Head of caudate nucleus (tissue), 42 donors: ENCODE measurements at regions of chr10 and their contacts with region 1.

Region 1: DNA sequence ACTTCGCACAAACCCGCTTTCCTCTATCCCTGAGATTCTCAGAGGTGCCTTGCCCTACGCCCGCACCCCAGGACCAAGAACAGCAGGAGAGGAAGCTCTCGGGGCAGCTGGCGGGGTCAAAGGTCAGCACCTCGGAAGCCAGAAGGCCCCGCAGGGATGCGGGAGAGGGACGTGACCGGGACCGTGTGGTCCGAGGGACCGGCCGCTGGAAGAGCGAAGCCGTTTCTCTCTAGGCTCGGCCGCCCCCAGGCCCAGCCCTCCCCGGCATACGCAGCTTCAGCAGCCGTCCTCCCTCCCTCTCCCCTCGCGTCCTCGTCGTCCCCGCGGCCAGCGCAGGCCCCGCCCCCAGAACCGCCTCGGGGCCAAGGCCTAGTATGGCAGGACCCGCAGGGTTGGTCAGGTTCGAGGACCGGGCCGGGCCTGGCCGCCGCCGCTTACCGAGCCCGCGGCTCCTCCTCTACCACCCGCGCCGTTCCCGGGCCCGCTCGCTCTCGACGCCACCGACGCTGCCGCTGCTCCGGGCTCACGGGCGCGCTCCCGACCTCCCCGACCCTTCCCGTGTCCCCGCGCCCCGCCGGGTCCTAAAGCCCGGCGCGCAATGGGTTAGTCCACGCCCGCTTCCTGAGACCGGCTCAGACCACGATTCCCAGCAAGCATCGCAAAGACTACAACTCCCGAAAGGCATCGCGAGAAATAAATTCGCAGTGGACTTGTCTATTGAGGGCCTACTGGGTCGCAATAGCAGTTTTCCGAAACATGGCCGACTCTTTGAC is at the start of gene ARMH3:
- DNase-seq: peak; percentile 91 to 99 (median 96)

Region 2: GRCh38 chr10:102132563-102133372 is 76.9 kb after region 1 on chr10 and contains the start of gene PPRC1:
- intact Hi-C with region 1: loop called (anchors 2 kb)
- DNase-seq: peak; percentile 97 to 100 (median 99)

Region 3: DNA sequence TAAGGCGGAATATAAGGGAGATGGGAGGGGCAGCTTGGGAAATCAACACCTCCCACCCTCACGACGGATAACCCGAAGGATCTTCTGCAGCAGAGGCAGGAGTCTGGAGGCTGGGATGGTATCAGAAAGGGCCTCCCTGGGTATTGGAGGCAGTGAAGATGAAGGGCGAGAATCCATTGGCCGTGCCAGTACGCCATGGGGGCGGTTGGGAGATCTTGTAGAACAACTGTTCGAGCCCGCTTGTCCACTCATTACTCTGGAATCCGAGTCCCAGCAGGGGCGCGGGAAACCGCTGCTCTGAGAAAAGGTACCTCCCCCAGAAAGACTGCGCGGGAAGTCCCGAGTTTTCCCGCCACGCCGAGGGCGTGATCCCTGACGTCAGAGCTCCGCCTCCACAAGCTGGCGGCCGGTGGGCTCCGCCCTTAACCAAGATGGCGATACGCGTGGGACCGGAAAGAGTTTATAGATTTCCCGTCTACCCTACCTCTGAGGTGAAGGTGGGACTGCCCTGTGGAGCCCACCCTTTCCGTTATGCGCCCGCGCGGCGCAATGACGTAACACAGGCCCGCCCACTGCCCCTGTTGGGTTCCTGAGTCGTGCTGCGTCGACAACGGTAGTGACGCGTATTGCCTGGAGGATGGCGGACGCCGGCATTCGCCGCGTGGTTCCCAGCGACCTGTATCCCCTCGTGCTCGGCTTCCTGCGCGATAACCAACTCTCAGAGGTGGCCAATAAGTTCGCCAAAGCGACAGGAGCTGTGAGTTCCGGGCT is 96.1 kb after region 1 on chr10 and contains the start of gene NOLC1:
- intact Hi-C with region 1: no loop called
- DNase-seq: peak; percentile 94 to 100 (median 98)